Activated T-helper 2 cell treated with anti-CD3 and anti-CD28 coated beads, Interferon-gamma antibody, Interleukin-2, Interleukin-4, amounts not matched to agents 10 μg/mL and 5 μg/mL and 100 μg/mL, durations not matched to agents 14 hours and 24 hours and 36 hours (primary cell): ENCODE measurements at regions of chr2 and their contacts with region 1.

Region 1: GRCh38 chr2:237474931-237475703 is 11.9 kb upstream of the MLPH start:
- DNase-seq: peak; percentile 68
- H3K4me3 Mint-ChIP-seq: peak overlapping the region; percentile 84
- H3K27ac Mint-ChIP-seq: peak overlapping the region; percentile 87
- H3K4me1 Mint-ChIP-seq: peaks cover 14% of the 10 kb centered on the region
- H3K27me3 Mint-ChIP-seq: peaks cover 29% of the 10 kb centered on the region

Region 2: DNA sequence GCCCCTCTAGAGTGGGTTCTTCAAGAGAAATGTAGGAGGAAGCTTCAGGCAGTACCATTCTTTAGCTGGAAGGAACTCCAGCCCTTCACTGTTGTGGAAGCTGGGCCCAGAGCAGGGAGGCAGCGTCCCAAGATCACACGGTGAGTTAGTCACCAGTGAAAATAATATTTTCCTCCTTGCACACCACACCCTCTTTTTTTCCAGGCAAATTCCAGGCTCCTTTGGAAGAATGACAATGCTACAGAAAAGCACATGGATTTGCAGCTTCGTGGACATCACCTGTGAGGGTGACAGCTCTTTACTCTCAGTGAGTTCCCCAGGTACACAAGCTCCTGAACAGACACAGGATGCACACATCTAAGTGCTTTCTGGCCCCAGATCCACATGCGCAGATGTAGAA is 218.2 kb before region 1 on chr2:
- intact Hi-C with region 1: no loop called
- DNase-seq: no peak
- H3K4me3 Mint-ChIP-seq: no peak overlapping the region
- H3K27ac Mint-ChIP-seq: no peak overlapping the region
- H3K4me1 Mint-ChIP-seq: peaks cover 4% of the 10 kb centered on the region
- H3K27me3 Mint-ChIP-seq: peaks cover 13% of the 10 kb centered on the region

Region 3: DNA sequence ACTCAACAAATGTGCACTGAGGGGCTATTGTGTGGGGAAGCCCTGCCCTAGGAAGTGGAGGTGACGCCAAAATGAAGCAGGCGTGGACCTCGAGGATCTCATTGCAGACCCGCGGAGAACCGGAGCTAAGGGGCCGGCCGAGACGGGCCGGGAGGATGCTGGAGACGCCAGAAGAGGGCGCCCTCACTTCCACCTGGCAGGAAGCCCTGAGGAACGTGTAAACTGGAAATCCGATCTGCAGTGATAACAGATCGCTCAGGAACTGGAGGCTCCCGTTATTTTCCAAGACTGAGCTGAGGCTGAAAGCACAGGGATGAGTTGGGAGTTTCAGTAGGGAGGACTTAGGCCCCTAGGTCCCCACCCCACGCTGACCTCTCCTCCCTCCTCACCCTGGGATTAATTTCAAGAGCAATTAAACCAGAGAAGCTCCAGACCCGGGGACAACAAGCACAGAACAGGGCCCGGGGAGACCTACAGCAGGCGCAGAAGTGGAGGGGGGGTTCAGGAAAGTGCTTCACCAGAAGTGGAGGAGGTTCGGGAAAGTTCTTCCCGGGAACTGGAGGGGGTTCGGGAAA is 53.5 kb before region 1 on chr2:
- intact Hi-C with region 1: loop called (anchors 1 kb)
- DNase-seq: peak; percentile 61
- H3K4me3 Mint-ChIP-seq: peak overlapping the region; percentile 37
- H3K27ac Mint-ChIP-seq: no peak overlapping the region
- H3K4me1 Mint-ChIP-seq: peaks cover 26% of the 10 kb centered on the region
- H3K27me3 Mint-ChIP-seq: peaks cover 6% of the 10 kb centered on the region

Region 4: GRCh38 chr2:237864940-237865622 is 390.0 kb after region 1 on chr2:
- intact Hi-C with region 1: no loop called
- DNase-seq: no peak
- H3K4me3 Mint-ChIP-seq: no peak overlapping the region
- H3K27ac Mint-ChIP-seq: no peak overlapping the region
- H3K4me1 Mint-ChIP-seq: peaks cover 10% of the 10 kb centered on the region
- H3K27me3 Mint-ChIP-seq: peaks cover 26% of the 10 kb centered on the region